ENCODE measurements at regions of chr14 and their contacts with region 1.

Region 1: DNA sequence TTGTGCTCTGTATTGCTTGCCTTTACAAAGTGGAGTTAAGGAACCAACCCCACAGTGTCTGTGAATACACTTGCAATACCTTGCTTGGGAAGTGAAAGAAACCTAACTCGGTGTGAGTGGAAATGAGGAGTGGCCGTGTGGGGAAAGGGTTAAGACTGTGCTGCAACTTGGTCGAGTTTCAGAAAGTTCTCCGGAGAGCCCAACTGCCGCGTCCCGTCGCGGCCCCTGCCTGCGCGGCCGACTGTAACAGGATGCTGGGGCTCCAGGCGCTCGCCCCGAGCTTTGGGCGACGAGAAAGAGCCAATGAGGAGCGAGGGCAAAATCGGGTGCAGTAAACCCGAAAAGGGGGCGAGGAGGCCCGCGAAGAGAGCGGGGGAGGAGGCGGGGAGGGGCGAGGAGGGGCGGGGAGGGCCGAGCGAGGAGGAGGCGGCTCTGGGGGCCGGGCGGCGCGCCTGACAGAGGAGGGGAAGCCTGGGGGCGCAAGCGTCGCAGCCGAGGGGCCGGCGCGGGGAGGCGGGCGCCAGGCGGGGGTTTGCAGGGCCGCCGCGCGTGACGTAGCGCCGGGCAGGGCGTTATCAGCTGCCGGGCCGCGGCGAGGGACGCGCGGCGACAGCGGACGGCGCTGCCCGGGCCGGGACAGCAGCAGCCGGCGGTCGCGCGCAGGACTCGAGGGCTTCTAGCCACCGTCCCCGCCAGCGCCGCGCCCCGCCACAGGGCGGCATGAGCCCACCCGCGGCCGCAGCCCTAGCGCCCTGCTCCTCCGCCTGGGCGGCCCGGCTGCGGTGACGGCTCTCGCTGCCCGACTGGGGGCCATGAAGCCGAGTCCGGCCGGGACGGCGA is at the start of gene DACT1:
- DNase-seq: peak; percentile 45 to 74 (median 64)
- ATAC-seq: peak; percentile 80
- H3K4me3 ChIP-seq: peak within 1 kb of the TSS; percentile 80
- H3K4me3 Mint-ChIP-seq: peak within 1 kb of the TSS; percentile 89 to 99 (median 98)
- H3K27ac ChIP-seq: peak within 1 kb of the TSS; percentile 61
- H3K27ac Mint-ChIP-seq: peak within 1 kb of the TSS; percentile 84 to 95 (median 91)
- H3K4me1 ChIP-seq: peaks cover 0 to 22% of the 10 kb centered on the region in 2 donors
- H3K4me1 Mint-ChIP-seq: peaks cover 20 to 61% (median 45%) of the 10 kb centered on the region in 7 donors
- H3K27me3 ChIP-seq: no peaks in the 10 kb centered on the region
- H3K27me3 Mint-ChIP-seq: peaks cover 0 to 44% (median 6%) of the 10 kb centered on the region in 5 donors
- total RNA-seq, gene DACT1: 8.2 to 32.3 (median 15.0) TPM

Region 2: DNA sequence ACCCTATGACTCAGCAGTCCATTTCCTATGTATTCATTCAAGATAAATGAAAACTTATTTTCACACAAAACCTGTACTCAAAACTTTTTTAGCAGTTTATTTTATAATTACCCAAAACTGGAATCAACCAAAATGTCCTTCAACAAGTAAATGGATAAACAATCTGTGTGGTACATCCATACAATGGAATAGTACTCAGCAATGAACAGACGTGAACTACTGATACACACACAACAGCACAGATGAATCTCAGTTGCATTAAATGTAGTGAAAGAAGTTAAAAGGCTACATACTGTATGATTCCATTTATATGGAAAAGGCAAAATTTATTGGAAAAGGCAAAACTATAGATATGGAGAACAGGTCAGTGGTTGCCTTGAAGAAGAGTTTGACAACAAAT is 120.0 kb before region 1 on chr14:
- CTCF ChIA-PET with region 1: no interaction called
- POLR2A ChIA-PET with region 1: no interaction called
- intact Hi-C with region 1: no loop called
- DNase-seq: no peak
- ATAC-seq: no peak
- H3K4me3 ChIP-seq: no peak overlapping the region
- H3K4me3 Mint-ChIP-seq: no peak overlapping the region
- H3K27ac ChIP-seq: no peak overlapping the region
- H3K27ac Mint-ChIP-seq: no peak overlapping the region
- H3K4me1 ChIP-seq: no peaks in the 10 kb centered on the region
- H3K4me1 Mint-ChIP-seq: peaks cover 0 to 5% (median 0%) of the 10 kb centered on the region in 7 donors
- H3K27me3 ChIP-seq: no peaks in the 10 kb centered on the region
- H3K27me3 Mint-ChIP-seq: no peaks in the 10 kb centered on the region

Region 3: DNA sequence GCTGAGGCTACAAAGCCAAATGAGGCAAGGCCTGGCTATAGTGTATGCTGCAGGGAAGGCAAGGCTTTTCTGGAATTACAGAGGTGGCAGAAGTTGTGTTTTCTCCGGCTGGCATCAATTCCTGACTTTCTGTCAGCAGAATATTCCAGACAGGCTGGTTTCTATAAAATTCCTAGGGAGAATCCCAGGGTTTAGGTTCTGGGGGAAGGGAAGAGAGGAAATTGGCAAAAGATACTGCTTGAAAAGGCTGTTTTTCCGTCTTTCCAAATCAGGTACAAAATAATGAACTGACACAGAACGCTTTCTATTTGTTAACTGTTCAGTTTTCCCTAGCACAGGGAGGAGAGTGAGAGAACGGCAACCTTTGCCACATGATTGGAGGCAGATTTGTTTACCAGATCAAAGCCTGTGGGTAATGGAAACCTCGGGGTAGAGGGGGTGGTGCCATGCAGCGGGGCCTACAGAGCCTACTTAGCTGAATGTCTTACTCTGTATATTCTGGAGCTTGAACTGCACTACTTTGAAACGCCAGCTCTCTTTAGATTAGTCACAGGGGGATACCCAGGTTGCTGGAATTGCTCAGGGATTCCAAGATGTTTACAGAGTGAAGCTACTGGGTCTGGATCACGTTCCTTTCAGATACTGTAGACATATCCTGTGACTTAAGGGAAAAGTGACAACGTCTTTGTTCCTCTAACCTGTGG is 65.7 kb before region 1 on chr14:
- CTCF ChIA-PET with region 1: interaction called, 3 read pairs
- POLR2A ChIA-PET with region 1: interaction called, 18 read pairs
- intact Hi-C with region 1: loop called (anchors 1 to 5 kb)
- DNase-seq: peak in 8 of 9 donors; percentile 41 to 80 (median 69)
- ATAC-seq: peak; percentile 87
- H3K4me3 ChIP-seq: no peak overlapping the region
- H3K4me3 Mint-ChIP-seq: peak overlapping the region; percentile 35 to 83 (median 70)
- H3K27ac ChIP-seq: peak overlapping the region; percentile 40
- H3K27ac Mint-ChIP-seq: peak overlapping the region; percentile 74 to 96 (median 93)
- H3K4me1 ChIP-seq: peaks cover 0 to 33% of the 10 kb centered on the region in 2 donors
- H3K4me1 Mint-ChIP-seq: peaks cover 14 to 67% (median 51%) of the 10 kb centered on the region in 7 donors
- H3K27me3 ChIP-seq: no peaks in the 10 kb centered on the region
- H3K27me3 Mint-ChIP-seq: no peaks in the 10 kb centered on the region

Region 4: GRCh38 chr14:58663494-58664415 is 26.1 kb after region 1 on chr14:
- CTCF ChIA-PET with region 1: interaction called, 3 read pairs
- POLR2A ChIA-PET with region 1: interaction called, 14 read pairs
- intact Hi-C with region 1: loop called in 1 of 2 experiments (anchors 1 kb)
- DNase-seq: no peak
- ATAC-seq: no peak
- H3K4me3 ChIP-seq: no peak overlapping the region
- H3K4me3 Mint-ChIP-seq: peak overlapping the region in 4 of 10 donors; percentile 1 to 61 (median 30)
- H3K27ac ChIP-seq: no peak overlapping the region
- H3K27ac Mint-ChIP-seq: peak overlapping the region; percentile 13 to 97 (median 71)
- H3K4me1 ChIP-seq: peaks cover 0 to 22% of the 10 kb centered on the region in 2 donors
- H3K4me1 Mint-ChIP-seq: peaks cover 18 to 43% (median 35%) of the 10 kb centered on the region in 7 donors
- H3K27me3 ChIP-seq: no peaks in the 10 kb centered on the region
- H3K27me3 Mint-ChIP-seq: no peaks in the 10 kb centered on the region

Region 5: GRCh38 chr14:58731465-58732330 is 94.1 kb after region 1 on chr14:
- CTCF ChIA-PET with region 1: no interaction called
- POLR2A ChIA-PET with region 1: no interaction called
- intact Hi-C with region 1: no loop called
- DNase-seq: no peak
- ATAC-seq: no peak
- H3K4me3 ChIP-seq: no peak overlapping the region
- H3K4me3 Mint-ChIP-seq: no peak overlapping the region
- H3K27ac ChIP-seq: no peak overlapping the region
- H3K27ac Mint-ChIP-seq: no peak overlapping the region
- H3K4me1 ChIP-seq: no peaks in the 10 kb centered on the region
- H3K4me1 Mint-ChIP-seq: peaks cover 0 to 5% (median 0%) of the 10 kb centered on the region in 7 donors
- H3K27me3 ChIP-seq: no peaks in the 10 kb centered on the region
- H3K27me3 Mint-ChIP-seq: peaks cover 0 to 7% (median 0%) of the 10 kb centered on the region in 5 donors

Region 6: GRCh38 chr14:59004012-59004411 is 366.4 kb after region 1 on chr14:
- CTCF ChIA-PET with region 1: no interaction called
- POLR2A ChIA-PET with region 1: no interaction called
- intact Hi-C with region 1: no loop called
- DNase-seq: no peak
- ATAC-seq: no peak
- H3K4me3 ChIP-seq: no peak overlapping the region
- H3K4me3 Mint-ChIP-seq: no peak overlapping the region
- H3K27ac ChIP-seq: no peak overlapping the region
- H3K27ac Mint-ChIP-seq: no peak overlapping the region
- H3K4me1 ChIP-seq: no peaks in the 10 kb centered on the region
- H3K4me1 Mint-ChIP-seq: no peaks in the 10 kb centered on the region
- H3K27me3 ChIP-seq: no peaks in the 10 kb centered on the region
- H3K27me3 Mint-ChIP-seq: peaks cover 2 to 19% (median 4%) of the 10 kb centered on the region in 5 donors

Region 7: GRCh38 chr14:59020382-59020781 is 382.8 kb after region 1 on chr14:
- CTCF ChIA-PET with region 1: interaction called, 3 read pairs
- POLR2A ChIA-PET with region 1: no interaction called
- intact Hi-C with region 1: loop called in 1 of 2 experiments (anchors 2 kb)
- DNase-seq: peak in 2 of 9 donors; percentile 1 to 12
- ATAC-seq: no peak
- H3K4me3 ChIP-seq: no peak overlapping the region
- H3K4me3 Mint-ChIP-seq: no peak overlapping the region
- H3K27ac ChIP-seq: no peak overlapping the region
- H3K27ac Mint-ChIP-seq: no peak overlapping the region
- H3K4me1 ChIP-seq: no peaks in the 10 kb centered on the region
- H3K4me1 Mint-ChIP-seq: peaks cover 0 to 4% (median 0%) of the 10 kb centered on the region in 7 donors
- H3K27me3 ChIP-seq: no peaks in the 10 kb centered on the region
- H3K27me3 Mint-ChIP-seq: peaks cover 0 to 10% (median 4%) of the 10 kb centered on the region in 5 donors